ENCODE measurements at regions of chr10 and their contacts with region 1.

Region 1: GRCh38 chr10:68560186-68560942 is at the start of gene TET1:
- DNase-seq: no peak
- H3K4me3 ChIP-seq: peak within 1 kb of the TSS; percentile 76 to 94 (median 84)
- H3K27ac ChIP-seq: peak within 1 kb of the TSS; percentile 43 to 64 (median 63)
- H3K4me1 ChIP-seq: peaks cover 12 to 42% (median 31%) of the 10 kb centered on the region in 4 donors
- H3K27me3 ChIP-seq: peaks cover 0 to 4% (median 0%) of the 10 kb centered on the region in 4 donors
- CTCF ChIP-seq: no peak
- EP300 ChIP-seq: no peak
- POLR2A ChIP-seq: no peak
- total RNA-seq, gene TET1: 6.9 to 9.6 (median 8.8) TPM

Region 2: GRCh38 chr10:68600041-68600778 is 39.8 kb after region 1 on chr10:
- intact Hi-C with region 1: loop called (anchors 5 kb)
- DNase-seq: no peak
- H3K4me3 ChIP-seq: peak overlapping the region; percentile 52 to 64 (median 58)
- H3K27ac ChIP-seq: peak overlapping the region; percentile 78 to 83 (median 80)
- H3K4me1 ChIP-seq: peaks cover 35 to 49% (median 45%) of the 10 kb centered on the region in 4 donors
- H3K27me3 ChIP-seq: no peaks in the 10 kb centered on the region
- CTCF ChIP-seq: no peak
- EP300 ChIP-seq: no peak
- POLR2A ChIP-seq: no peak

Measured in esophagus muscularis mucosa (tissue), 4 donors.